ENCODE measurements at regions of chr10 and their contacts with region 1.

Region 1: GRCh38 chr10:124388823-124389612 is 29.7 kb downstream of the OAT start:
- DNase-seq: peak; percentile 91
- ATAC-seq: peak; percentile 99
- H3K4me3 Mint-ChIP-seq: no peak overlapping the region
- H3K27ac Mint-ChIP-seq: no peak overlapping the region
- H3K4me1 Mint-ChIP-seq: peaks cover 3% of the 10 kb centered on the region
- H3K27me3 Mint-ChIP-seq: peaks cover 4% of the 10 kb centered on the region
- CTCF ChIP-seq: peak; percentile 89

Region 2: DNA sequence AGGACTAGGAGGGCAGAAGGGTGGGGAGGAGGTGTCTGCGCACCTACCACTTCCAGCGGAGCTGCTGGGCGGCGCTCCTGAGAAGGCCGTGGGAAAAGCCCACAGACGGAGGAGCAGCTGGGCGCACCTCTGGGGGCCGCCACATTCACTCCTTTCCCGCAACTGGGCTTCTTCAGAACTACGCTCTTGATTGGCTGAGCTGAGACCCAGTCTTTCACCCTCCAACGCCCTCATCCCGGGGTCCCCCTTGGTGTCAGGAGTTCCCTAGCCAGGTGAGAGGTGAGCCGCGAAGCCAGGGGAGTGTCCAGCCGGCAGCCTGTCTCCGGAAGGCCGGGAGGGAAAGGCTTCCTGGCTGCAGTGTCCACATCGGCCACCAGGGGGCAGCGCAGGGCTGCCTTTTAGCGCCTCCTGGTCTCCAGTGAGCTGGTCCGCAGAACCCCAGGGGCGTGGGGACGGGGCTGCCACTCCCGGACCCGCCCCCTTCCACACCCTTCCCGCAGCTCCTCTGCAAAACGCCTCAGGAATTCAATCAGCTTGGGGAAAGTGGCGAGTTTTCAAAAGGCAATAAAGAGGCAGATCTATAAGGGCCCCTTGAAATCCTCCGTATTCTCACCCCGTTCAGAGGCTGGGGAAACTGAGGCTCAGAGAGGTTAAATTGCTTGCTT is 394.5 kb before region 1 on chr10:
- CTCF ChIA-PET with region 1: interaction called, 193 read pairs
- POLR2A ChIA-PET with region 1: interaction called, 3 read pairs
- intact Hi-C with region 1: loop called (anchors 1 kb)
- DNase-seq: peak; percentile 84
- ATAC-seq: peak; percentile 86
- H3K4me3 Mint-ChIP-seq: peak overlapping the region; percentile 20
- H3K27ac Mint-ChIP-seq: no peak overlapping the region
- H3K4me1 Mint-ChIP-seq: peaks cover 9% of the 10 kb centered on the region
- H3K27me3 Mint-ChIP-seq: peaks cover 43% of the 10 kb centered on the region
- CTCF ChIP-seq: peak; percentile 99

Region 3: GRCh38 chr10:124193309-124193696 is 195.7 kb before region 1 on chr10:
- CTCF ChIA-PET with region 1: interaction called, 15 read pairs
- POLR2A ChIA-PET with region 1: no interaction called
- intact Hi-C with region 1: no loop called
- DNase-seq: no peak
- ATAC-seq: no peak
- H3K4me3 Mint-ChIP-seq: no peak overlapping the region
- H3K27ac Mint-ChIP-seq: no peak overlapping the region
- H3K4me1 Mint-ChIP-seq: no peaks in the 10 kb centered on the region
- H3K27me3 Mint-ChIP-seq: peaks cover 16% of the 10 kb centered on the region
- CTCF ChIP-seq: no peak

Region 4: GRCh38 chr10:124251317-124252065 is 137.5 kb before region 1 on chr10:
- CTCF ChIA-PET with region 1: interaction called, 13 read pairs
- POLR2A ChIA-PET with region 1: no interaction called
- intact Hi-C with region 1: loop called (anchors 10 kb)
- DNase-seq: no peak
- ATAC-seq: no peak
- H3K4me3 Mint-ChIP-seq: no peak overlapping the region
- H3K27ac Mint-ChIP-seq: no peak overlapping the region
- H3K4me1 Mint-ChIP-seq: no peaks in the 10 kb centered on the region
- H3K27me3 Mint-ChIP-seq: peaks cover 3% of the 10 kb centered on the region
- CTCF ChIP-seq: no peak

Region 5: DNA sequence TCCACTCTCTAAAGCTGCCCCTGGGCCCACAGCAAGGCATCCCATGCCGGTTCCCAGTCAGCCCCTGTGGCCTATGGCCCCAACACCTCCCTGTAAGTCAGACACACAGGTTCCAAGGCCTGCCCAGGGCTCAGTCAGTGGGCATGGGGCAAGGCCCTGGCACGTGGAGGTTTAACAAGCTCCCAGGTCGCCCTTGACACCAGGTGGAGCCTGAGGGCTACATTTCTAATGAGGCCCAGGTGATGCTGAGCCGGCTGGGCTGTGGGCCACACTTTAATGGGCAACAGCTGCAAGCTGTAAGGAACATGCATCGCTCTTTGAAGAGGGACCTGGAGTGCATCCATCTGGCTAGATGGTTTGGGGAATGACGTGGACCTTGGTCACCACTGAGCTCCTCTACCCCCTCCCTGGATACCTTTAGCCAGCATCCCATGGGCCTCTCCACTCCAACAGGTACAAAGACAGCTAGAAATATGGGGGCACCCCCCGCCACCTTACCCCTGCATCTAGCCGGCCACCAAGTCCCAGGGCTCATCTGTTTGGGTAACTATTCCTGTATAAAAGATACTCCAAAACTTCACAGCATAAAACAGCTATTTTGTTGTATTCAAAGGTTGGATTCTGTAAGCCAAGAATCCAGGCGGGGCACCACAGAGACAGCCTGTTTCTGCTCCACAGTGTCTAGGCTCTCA is 92.8 kb before region 1 on chr10:
- CTCF ChIA-PET with region 1: interaction called, 12 read pairs
- POLR2A ChIA-PET with region 1: no interaction called
- intact Hi-C with region 1: no loop called
- DNase-seq: peak; percentile 23
- ATAC-seq: no peak
- H3K4me3 Mint-ChIP-seq: no peak overlapping the region
- H3K27ac Mint-ChIP-seq: no peak overlapping the region
- H3K4me1 Mint-ChIP-seq: no peaks in the 10 kb centered on the region
- H3K27me3 Mint-ChIP-seq: no peaks in the 10 kb centered on the region
- CTCF ChIP-seq: no peak

Region 6: GRCh38 chr10:124378881-124379471 is 10.0 kb before region 1 on chr10:
- CTCF ChIA-PET with region 1: interaction called, 26 read pairs
- POLR2A ChIA-PET with region 1: no interaction called
- intact Hi-C with region 1: no loop called
- DNase-seq: no peak
- ATAC-seq: no peak
- H3K4me3 Mint-ChIP-seq: no peak overlapping the region
- H3K27ac Mint-ChIP-seq: no peak overlapping the region
- H3K4me1 Mint-ChIP-seq: no peaks in the 10 kb centered on the region
- H3K27me3 Mint-ChIP-seq: peaks cover 28% of the 10 kb centered on the region
- CTCF ChIP-seq: no peak

Region 7: GRCh38 chr10:124418726-124419501 is 29.9 kb after region 1 on chr10 and contains the start of gene OAT:
- CTCF ChIA-PET with region 1: interaction called, 27 read pairs
- POLR2A ChIA-PET with region 1: no interaction called
- intact Hi-C with region 1: no loop called
- DNase-seq: peak; percentile 99
- ATAC-seq: peak; percentile 99
- H3K4me3 Mint-ChIP-seq: peak within 1 kb of the TSS; percentile 81
- H3K27ac Mint-ChIP-seq: peak within 1 kb of the TSS; percentile 64
- H3K4me1 Mint-ChIP-seq: peaks cover 16% of the 10 kb centered on the region
- H3K27me3 Mint-ChIP-seq: peaks cover 4% of the 10 kb centered on the region
- CTCF ChIP-seq: no peak
- total RNA-seq, gene OAT: 40.2 to 44.3 TPM

Measured in activated CD8-positive, alpha-beta T cell treated with anti-CD3 and anti-CD28 coated beads for 36 hours (primary cell).